Esophagus muscularis mucosa (tissue), 4 donors: ENCODE measurements at regions of chr3 and their contacts with region 1.

Region 1: DNA sequence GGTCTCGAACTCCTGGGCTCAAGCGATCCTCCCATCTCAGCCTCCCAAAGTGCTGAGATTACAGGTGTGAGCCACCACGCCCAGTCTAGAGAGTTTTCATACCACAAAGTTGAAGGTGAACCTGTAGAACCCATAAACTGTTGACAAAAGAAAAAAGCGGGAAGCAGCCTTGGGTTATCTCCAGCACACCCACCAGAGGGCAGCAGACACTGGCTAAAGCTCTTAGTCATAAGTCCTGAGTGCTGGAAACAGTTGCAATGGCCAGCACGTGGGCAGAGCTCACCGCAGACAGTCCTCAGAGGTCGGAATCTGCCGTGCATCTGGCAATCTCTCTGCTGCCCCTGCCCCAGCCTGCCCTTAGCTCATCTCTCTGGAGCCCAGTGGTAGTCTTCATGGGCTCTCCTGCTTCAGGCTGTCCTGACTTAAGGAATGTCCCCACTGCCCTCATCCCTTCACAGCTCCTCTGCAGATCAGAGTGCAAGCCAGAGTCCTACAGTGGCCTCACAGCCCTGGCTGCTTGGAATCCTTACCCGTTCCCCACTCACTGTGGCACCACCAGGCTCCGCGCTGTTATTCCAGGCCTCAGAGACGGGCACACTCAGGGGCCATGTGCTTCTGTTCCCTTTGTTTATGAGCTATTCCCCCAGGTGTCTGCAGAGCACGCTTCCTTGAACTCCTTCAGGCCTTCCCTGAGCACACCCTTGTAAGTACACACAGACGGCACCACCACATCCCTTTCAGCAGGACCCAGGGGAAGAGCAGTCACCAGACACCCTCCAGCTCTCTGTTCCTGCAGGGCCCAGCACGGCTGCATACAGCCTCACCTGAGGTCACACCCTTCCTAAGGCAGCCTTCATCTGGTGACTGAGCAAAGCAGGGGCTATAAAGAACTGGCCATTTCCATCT is 8.8 kb upstream of the ELP6 start:
- DNase-seq: no peak
- H3K4me3 ChIP-seq: no peak overlapping the region
- H3K27ac ChIP-seq: no peak overlapping the region
- H3K4me1 ChIP-seq: peaks cover 3 to 10% (median 6%) of the 10 kb centered on the region in 4 donors
- H3K27me3 ChIP-seq: no peaks in the 10 kb centered on the region
- CTCF ChIP-seq: peak; percentile 91 to 95 (median 92)
- EP300 ChIP-seq: no peak
- POLR2A ChIP-seq: no peak

Region 2: GRCh38 chr3:47664519-47664918 is 142.2 kb after region 1 on chr3:
- intact Hi-C with region 1: loop called (anchors 10 kb)
- DNase-seq: no peak
- H3K4me3 ChIP-seq: no peak overlapping the region
- H3K27ac ChIP-seq: no peak overlapping the region
- H3K4me1 ChIP-seq: no peaks in the 10 kb centered on the region
- H3K27me3 ChIP-seq: no peaks in the 10 kb centered on the region
- CTCF ChIP-seq: peak in 1 of 3 experiments; percentile 16
- EP300 ChIP-seq: no peak
- POLR2A ChIP-seq: no peak

Region 3: GRCh38 chr3:47762233-47762632 is 239.9 kb after region 1 on chr3:
- intact Hi-C with region 1: no loop called
- DNase-seq: no peak
- H3K4me3 ChIP-seq: no peak overlapping the region
- H3K27ac ChIP-seq: no peak overlapping the region
- H3K4me1 ChIP-seq: peaks cover 4 to 25% (median 20%) of the 10 kb centered on the region in 4 donors
- H3K27me3 ChIP-seq: no peaks in the 10 kb centered on the region
- CTCF ChIP-seq: no peak
- EP300 ChIP-seq: no peak
- POLR2A ChIP-seq: no peak

Region 4: GRCh38 chr3:47791193-47791855 is 269.0 kb after region 1 on chr3:
- intact Hi-C with region 1: loop called (anchors 1 kb)
- DNase-seq: no peak
- H3K4me3 ChIP-seq: no peak overlapping the region
- H3K27ac ChIP-seq: no peak overlapping the region
- H3K4me1 ChIP-seq: peaks cover 4 to 10% (median 5%) of the 10 kb centered on the region in 4 donors
- H3K27me3 ChIP-seq: no peaks in the 10 kb centered on the region
- CTCF ChIP-seq: no peak
- EP300 ChIP-seq: no peak
- POLR2A ChIP-seq: no peak